ENCODE measurements at regions of chr19 and their contacts with region 1.

Region 1: DNA sequence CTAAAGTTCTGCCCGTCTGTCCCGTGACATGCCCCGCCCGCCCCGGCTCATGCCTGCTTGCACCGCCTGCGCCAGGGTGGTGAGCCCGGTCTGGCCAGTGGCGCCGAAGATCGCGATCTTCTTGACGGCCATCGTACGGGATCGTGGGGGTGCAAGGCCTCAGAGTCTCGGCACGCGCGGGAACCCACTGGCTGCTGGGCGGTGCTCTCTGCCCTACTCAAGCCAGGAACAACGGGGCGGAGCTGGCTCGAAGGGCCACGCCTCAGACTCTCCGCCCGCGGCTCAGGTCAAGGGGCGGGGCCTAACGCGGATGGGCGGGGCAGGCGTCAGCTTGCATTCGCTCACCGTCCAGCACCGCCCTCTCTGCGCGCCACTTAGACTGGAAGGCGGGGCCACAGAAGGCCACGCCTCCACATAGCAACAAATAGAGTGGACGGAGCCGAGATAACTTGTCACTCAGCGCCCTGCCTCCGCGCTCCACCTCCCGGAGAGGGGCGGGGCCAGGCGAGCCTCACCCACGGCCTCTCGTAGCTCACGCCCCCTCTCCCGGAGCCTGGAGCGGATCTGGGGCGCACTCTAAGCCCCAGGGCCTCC is at the start of gene BLVRB:
- DNase-seq: peak; percentile 99 to 100 (median 100)

Region 2: DNA sequence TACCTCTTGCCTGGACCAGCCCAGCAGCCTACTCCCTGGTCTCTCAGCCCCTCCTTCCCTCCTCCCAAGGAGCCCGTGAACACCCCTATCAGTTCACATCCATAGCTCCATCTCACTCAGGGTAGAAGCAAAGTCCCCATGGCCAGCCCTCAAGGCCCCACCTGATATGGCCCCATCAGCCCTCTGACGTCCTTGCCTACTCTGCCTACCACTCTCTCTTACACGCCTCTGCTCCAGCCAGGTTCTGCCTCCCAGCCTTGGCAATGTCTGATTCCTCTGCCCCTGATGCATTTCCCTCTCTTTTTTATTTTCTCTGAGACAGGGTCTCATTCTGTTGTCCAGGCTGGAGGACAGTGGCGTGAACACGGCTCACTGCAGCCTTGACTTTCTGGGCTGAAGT is 13.6 kb before region 1 on chr19:
- intact Hi-C with region 1: no loop called
- DNase-seq: no peak

Region 3: DNA sequence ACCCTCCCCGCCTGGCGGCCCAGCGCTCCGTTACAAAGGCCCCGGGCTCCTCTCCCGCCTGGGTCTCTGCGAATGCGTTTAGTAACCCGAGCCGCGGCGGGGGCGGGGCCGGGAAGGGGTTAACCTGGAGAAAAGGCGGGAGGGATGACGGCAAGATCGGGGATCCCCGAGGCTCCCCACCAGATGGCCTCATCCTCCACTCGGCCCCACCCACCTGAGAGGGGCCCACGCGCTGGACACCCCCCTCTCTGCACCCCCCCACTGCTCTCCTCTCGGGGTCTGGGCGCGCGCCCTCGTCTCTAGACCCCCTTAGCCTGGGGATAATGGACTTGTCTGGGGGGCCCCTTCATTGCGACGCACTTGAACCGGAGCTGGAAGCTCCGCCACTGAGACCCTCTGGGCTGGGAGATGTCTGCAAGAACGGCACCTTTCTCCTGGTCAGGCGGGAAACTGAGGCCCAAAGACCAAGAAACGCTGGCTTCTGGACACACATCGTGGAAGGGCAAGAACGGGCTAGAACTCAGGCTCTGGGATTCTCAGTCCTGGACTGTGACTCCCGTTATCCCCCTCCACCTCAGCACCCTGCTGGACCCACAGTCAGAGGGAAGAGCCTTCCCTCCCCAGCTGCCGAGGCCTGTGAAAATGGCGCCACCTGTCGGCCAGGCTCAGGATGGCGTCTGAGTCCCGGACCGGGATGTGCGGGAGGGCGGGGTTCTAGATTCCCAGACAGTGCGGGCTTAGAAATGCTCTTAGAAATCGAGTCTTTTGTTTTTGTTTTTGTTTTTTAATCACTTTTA is 132.7 kb after region 1 on chr19:
- intact Hi-C with region 1: loop called (anchors 2 kb)
- DNase-seq: peak; percentile 77 to 98 (median 90)

Measured in posterior cingulate gyrus (tissue), 11 donors.